ENCODE measurements at regions of chr21 and their contacts with region 1.

Region 1: GRCh38 chr21:31558962-31559367 is 100.5 kb upstream of the SOD1 start:
- DNase-seq: peak; percentile 96
- H3K4me3 Mint-ChIP-seq: peak overlapping the region; percentile 89
- H3K27ac Mint-ChIP-seq: no peak overlapping the region
- H3K4me1 Mint-ChIP-seq: peaks cover 39% of the 10 kb centered on the region
- H3K27me3 Mint-ChIP-seq: peaks cover 23% of the 10 kb centered on the region

Region 2: DNA sequence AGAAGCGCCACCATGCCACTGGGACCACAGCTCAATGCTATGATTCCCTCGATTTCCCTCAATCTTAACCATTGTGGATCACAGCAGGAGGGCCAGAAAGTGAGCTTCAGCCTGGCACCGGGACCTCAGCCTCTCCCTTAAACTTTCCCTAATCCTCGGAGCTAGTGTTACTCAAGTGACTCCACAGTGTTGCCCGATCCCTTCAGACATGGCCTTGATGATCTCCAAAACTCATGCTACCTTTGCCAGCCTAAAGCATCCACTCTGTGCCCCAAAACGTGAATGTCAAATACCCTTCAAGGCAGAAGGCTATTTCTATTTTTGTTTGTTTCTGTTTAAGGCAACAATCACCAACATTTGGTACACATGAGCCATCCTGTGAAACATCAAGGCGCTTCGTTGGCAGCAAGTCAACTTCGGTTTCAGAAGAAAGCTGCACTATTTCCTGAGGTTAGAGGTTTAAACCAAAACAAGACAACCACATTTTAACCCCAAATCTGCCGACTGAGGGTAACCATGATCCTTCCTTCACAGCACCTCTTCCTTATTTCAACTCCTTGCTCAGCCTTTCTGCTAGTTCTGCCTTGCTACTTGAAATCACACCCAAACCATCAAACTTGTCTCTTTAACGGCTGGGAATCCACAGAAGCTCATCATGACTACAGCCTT is 426.3 kb before region 1 on chr21:
- CTCF ChIA-PET with region 1: no interaction called
- intact Hi-C with region 1: loop called (anchors 1 kb)
- DNase-seq: peak; percentile 89
- H3K4me3 Mint-ChIP-seq: peak overlapping the region; percentile 32
- H3K27ac Mint-ChIP-seq: peak overlapping the region; percentile 83
- H3K4me1 Mint-ChIP-seq: peaks cover 64% of the 10 kb centered on the region
- H3K27me3 Mint-ChIP-seq: no peaks in the 10 kb centered on the region

Region 3: DNA sequence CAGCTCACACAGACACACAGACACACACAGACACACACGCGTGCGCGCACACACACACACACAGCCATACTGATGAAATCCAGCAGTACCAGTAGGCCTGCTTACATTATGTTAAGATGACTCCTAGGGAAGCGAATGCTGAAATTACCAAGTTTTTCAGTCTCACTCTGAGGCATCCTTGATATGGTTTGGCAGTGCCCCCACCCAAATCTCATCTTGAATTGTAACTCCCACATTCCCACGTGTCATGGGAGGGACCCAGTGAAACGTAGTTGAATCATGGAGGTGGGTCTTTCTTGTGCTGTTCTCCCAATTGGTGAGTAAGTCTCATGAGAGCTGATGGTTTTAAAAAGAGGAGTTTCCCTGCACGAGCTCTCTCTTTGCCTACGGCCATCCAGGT is 279.0 kb before region 1 on chr21:
- CTCF ChIA-PET with region 1: no interaction called
- intact Hi-C with region 1: loop called (anchors 1 kb)
- DNase-seq: peak; percentile 18
- H3K4me3 Mint-ChIP-seq: no peak overlapping the region
- H3K27ac Mint-ChIP-seq: no peak overlapping the region
- H3K4me1 Mint-ChIP-seq: peaks cover 30% of the 10 kb centered on the region
- H3K27me3 Mint-ChIP-seq: no peaks in the 10 kb centered on the region

Region 4: GRCh38 chr21:31326522-31327242 is 232.3 kb before region 1 on chr21:
- CTCF ChIA-PET with region 1: no interaction called
- intact Hi-C with region 1: loop called (anchors 1 kb)
- DNase-seq: peak; percentile 83
- H3K4me3 Mint-ChIP-seq: peak overlapping the region; percentile 45
- H3K27ac Mint-ChIP-seq: peak overlapping the region; percentile 92
- H3K4me1 Mint-ChIP-seq: peaks cover 37% of the 10 kb centered on the region
- H3K27me3 Mint-ChIP-seq: no peaks in the 10 kb centered on the region

Region 5: DNA sequence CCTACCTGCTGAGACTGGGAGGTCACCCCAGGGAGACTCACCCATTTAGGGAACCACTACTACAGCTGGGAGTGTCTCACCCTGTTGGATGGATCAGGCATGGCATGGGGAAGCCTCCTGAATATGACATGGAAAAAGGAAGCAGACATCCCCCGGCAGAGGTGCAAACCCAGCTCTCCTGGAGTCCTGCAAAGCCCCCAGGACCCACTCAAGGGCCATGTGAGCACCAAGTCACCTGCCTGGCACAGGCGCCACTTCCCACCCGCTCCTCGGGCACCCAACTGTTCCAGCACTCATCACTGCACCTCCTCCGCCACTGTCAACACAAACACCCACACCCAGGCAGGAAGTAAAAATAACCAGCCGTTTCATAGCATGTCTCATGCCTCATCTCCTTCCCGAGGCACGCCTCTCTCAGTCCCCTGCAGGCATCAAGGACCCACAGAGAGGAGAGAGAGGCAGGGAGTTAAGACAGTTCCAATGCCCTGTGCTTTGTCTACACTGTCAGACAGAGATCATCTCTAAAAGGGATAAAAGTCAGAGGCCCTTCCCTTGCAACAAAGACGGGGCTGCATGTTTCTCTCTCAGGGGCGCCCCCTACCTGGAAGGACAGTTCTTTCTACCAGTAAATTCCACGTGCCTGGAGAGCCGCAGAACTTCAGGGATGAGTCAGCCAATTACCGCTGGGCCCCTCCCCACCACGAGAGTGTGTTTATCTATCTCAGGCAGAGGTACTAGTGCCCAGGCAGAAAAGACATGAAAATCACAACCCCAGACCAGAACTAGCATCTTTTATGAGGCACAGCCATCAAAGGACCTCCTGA is 49.6 kb before region 1 on chr21:
- CTCF ChIA-PET with region 1: no interaction called
- intact Hi-C with region 1: loop called (anchors 1 kb)
- DNase-seq: peak; percentile 96
- H3K4me3 Mint-ChIP-seq: peak overlapping the region; percentile 43
- H3K27ac Mint-ChIP-seq: peak overlapping the region; percentile 80
- H3K4me1 Mint-ChIP-seq: peaks cover 33% of the 10 kb centered on the region
- H3K27me3 Mint-ChIP-seq: no peaks in the 10 kb centered on the region

Region 6: DNA sequence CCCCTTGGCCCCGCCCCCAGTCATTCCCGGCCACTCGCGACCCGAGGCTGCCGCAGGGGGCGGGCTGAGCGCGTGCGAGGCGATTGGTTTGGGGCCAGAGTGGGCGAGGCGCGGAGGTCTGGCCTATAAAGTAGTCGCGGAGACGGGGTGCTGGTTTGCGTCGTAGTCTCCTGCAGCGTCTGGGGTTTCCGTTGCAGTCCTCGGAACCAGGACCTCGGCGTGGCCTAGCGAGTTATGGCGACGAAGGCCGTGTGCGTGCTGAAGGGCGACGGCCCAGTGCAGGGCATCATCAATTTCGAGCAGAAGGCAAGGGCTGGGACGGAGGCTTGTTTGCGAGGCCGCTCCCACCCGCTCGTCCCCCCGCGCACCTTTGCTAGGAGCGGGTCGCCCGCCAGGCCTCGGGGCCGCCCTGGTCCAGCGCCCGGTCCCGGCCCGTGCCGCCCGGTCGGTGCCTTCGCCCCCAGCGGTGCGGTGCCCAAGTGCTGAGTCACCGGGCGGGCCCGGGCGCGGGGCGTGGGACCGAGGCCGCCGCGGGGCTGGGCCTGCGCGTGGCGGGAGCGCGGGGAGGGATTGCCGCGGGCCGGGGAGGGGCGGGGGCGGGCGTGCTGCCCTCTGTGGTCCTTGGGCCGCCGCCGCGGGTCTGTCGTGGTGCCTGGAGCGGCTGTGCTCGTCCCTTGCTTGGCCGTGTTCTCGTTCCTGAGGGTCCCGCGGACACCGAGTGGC is 100.7 kb after region 1 on chr21 and contains the start of gene SOD1:
- CTCF ChIA-PET with region 1: no interaction called
- intact Hi-C with region 1: loop called (anchors 1 kb)
- DNase-seq: peak; percentile 95
- H3K4me3 Mint-ChIP-seq: peak within 1 kb of the TSS; percentile 100
- H3K27ac Mint-ChIP-seq: peak within 1 kb of the TSS; percentile 99
- H3K4me1 Mint-ChIP-seq: peaks cover 68% of the 10 kb centered on the region
- H3K27me3 Mint-ChIP-seq: no peaks in the 10 kb centered on the region
- total RNA-seq, gene SOD1: 281 to 297 TPM

Region 7: GRCh38 chr21:32278518-32279376 is 719.8 kb after region 1 on chr21 and contains the start of gene MIS18A:
- CTCF ChIA-PET with region 1: no interaction called
- intact Hi-C with region 1: loop called (anchors 1 kb)
- DNase-seq: peak; percentile 98
- H3K4me3 Mint-ChIP-seq: peak within 1 kb of the TSS; percentile 100
- H3K27ac Mint-ChIP-seq: peak within 1 kb of the TSS; percentile 90
- H3K4me1 Mint-ChIP-seq: peaks cover 17% of the 10 kb centered on the region
- H3K27me3 Mint-ChIP-seq: no peaks in the 10 kb centered on the region
- total RNA-seq, gene MIS18A: 37.4 to 37.8 TPM

Measured in activated naive CD4-positive, alpha-beta T cell treated with anti-CD3 and anti-CD28 coated beads for 36 hours (primary cell).